Thyroid gland (tissue), 4 donors: ENCODE measurements at regions of chr1 and their contacts with region 1.

Region 1: GRCh38 chr1:240691521-240692338 is 79.8 kb upstream of the GREM2 start:
- DNase-seq: peak; percentile 40 to 54
- H3K4me3 ChIP-seq: no peak overlapping the region
- H3K27ac ChIP-seq: no peak overlapping the region
- H3K4me1 ChIP-seq: no peaks in the 10 kb centered on the region
- H3K27me3 ChIP-seq: no peaks in the 10 kb centered on the region
- CTCF ChIP-seq: peak in 4 of 6 experiments; percentile 63 to 80 (median 77)
- POLR2A ChIP-seq: no peak

Region 2: GRCh38 chr1:240190881-240191401 is 500.8 kb before region 1 on chr1:
- intact Hi-C with region 1: loop called (anchors 5 kb)
- DNase-seq: peak; percentile 42
- H3K4me3 ChIP-seq: no peak overlapping the region
- H3K27ac ChIP-seq: no peak overlapping the region
- H3K4me1 ChIP-seq: peaks cover 0 to 4% of the 10 kb centered on the region in 2 donors
- H3K27me3 ChIP-seq: no peaks in the 10 kb centered on the region
- CTCF ChIP-seq: peak in 4 of 6 experiments; percentile 29 to 81 (median 63)
- POLR2A ChIP-seq: no peak